WTC11 (cell line): ENCODE measurements at regions of chr9 and their contacts with region 1.

Region 1: DNA sequence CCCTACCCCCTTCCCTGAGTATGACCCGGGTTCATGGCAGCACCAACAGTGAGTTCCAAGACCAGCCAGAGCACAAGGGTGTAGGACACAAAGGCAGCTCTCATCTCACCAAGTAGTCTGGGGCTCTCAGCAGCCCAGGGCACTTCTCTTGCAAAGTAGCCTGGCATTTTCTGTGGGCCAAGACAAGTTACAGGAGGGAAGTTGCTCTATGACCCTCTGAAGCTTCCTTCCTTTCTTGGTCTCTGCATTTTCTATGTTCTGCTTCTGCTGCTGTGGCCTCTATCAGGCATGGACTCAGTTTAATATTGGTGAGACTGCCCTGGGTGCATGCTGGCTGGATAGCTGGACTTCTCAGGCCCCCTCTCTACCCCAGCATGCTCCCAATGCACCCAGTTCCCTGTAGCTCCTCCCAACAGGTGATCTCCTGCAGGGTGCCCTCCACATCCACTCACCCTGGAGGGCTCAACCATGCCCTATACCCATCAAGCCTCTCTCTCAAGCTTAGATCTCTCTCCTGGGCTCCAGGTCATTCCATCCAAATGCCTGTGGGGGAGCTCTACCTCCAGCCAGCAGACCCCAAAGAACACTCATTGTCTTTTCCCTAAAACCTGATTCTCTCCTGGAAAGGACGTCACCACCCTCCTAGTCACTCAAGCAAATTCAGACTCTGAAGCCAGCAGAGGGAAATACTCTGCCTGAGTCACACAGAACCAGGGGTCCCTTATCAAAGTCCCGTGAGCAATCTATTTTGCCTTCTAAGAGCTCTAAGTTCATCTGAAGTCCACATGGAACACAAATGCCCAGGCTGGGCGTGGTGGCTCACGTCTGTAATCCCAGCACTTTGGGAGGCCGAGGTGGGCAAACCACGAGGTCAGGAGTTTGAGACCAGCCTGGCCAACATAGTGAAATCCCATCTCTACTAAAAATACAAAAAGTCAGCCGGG is 13.8 kb downstream of the TBC1D2 start:
- DNase-seq: peak; percentile 31
- ATAC-seq: peak; percentile 86
- H3K4me3 Mint-ChIP-seq: no peak overlapping the region
- H3K27ac Mint-ChIP-seq: 0 out of 2 replicates have a peak overlapping the region, but pooled peaks have one; percentile 45
- H3K4me1 Mint-ChIP-seq: peaks cover 29% of the 10 kb centered on the region
- H3K27me3 Mint-ChIP-seq: no peaks in the 10 kb centered on the region
- CTCF ChIP-seq: 0 out of 2 replicates have a peak, but pooled peaks have one; percentile 16

Region 2: GRCh38 chr9:98101868-98102273 is 139.8 kb before region 1 on chr9:
- CTCF ChIA-PET with region 1: no interaction called
- POLR2A ChIA-PET with region 1: no interaction called
- DNase-seq: no peak
- ATAC-seq: peak; percentile 86
- H3K4me3 Mint-ChIP-seq: no peak overlapping the region
- H3K27ac Mint-ChIP-seq: no peak overlapping the region
- H3K4me1 Mint-ChIP-seq: peaks cover 18% of the 10 kb centered on the region
- H3K27me3 Mint-ChIP-seq: no peaks in the 10 kb centered on the region
- CTCF ChIP-seq: no peak

Region 3: DNA sequence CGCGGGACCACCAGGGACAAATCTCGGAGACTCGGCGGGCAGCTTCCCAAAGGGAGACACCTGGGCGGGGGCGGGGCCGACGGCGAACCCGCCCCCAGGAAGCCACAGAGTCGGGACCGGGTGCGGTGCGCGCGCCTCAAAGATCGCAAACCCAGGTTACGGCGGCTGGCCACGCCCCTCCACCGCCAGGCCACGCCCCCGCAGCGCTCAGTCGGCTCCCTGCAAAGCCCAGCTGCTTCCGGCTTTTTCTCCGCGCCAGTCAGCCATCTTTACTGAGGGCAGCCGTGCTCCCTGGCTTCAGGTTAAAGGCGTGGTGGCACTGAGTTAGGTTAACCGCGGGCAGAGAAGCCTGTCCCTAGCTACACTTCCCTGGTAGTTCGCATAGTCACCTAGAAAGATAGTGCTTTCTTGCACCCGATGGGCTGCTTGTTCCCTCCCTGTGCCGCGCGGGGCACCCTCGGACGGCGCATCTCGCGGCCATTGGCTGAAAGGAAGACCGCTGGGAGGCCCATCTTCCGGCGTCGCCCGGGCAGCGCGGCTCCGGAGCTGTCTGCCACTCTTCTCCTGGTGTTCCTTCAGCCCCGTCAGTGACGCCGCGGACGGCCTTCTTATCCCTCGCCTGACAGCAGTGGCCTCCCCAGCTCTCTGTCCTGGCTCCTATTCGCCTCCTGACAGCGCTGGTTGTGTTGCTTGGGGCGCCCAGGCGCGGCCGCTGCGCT is 14.1 kb after region 1 on chr9 and contains the start of gene TBC1D2:
- CTCF ChIA-PET with region 1: interaction called, 29 read pairs
- POLR2A ChIA-PET with region 1: interaction called, 5 read pairs
- DNase-seq: peak; percentile 98
- ATAC-seq: peak; percentile 90
- H3K4me3 Mint-ChIP-seq: peak within 1 kb of the TSS; percentile 93
- H3K27ac Mint-ChIP-seq: peak within 1 kb of the TSS; percentile 95
- H3K4me1 Mint-ChIP-seq: peaks cover 42% of the 10 kb centered on the region
- H3K27me3 Mint-ChIP-seq: no peaks in the 10 kb centered on the region
- CTCF ChIP-seq: no peak
- total RNA-seq, gene TBC1D2: 10.6 to 11.4 TPM (median 11.1 TPM) in 3 replicates

Region 4: GRCh38 chr9:98958271-98958984 is 716.8 kb after region 1 on chr9:
- CTCF ChIA-PET with region 1: no interaction called
- POLR2A ChIA-PET with region 1: no interaction called
- DNase-seq: no peak
- ATAC-seq: no peak
- H3K4me3 Mint-ChIP-seq: no peak overlapping the region
- H3K27ac Mint-ChIP-seq: no peak overlapping the region
- H3K4me1 Mint-ChIP-seq: peaks cover 18% of the 10 kb centered on the region
- H3K27me3 Mint-ChIP-seq: peaks cover 4% of the 10 kb centered on the region; the same call in 1 of the 2 replicates
- CTCF ChIP-seq: no peak